ENCODE measurements at regions of chr18 and their contacts with region 1.

Region 1: GRCh38 chr18:67359873-67360838 is 156.4 kb downstream of the DSEL start:
- DNase-seq: no peak
- ATAC-seq: no peak
- H3K4me3 ChIP-seq: no peak overlapping the region
- H3K4me3 Mint-ChIP-seq: no peak overlapping the region
- H3K27ac ChIP-seq: no peak overlapping the region
- H3K27ac Mint-ChIP-seq: no peak overlapping the region
- H3K4me1 ChIP-seq: no peaks in the 10 kb centered on the region
- H3K4me1 Mint-ChIP-seq: peaks cover 0 to 11% (median 0%) of the 10 kb centered on the region in 7 donors
- H3K27me3 ChIP-seq: no peaks in the 10 kb centered on the region
- H3K27me3 Mint-ChIP-seq: peaks cover 0 to 3% (median 0%) of the 10 kb centered on the region in 5 donors

Region 2: GRCh38 chr18:67373646-67374045 is 13.5 kb after region 1 on chr18:
- CTCF ChIA-PET with region 1: no interaction called
- POLR2A ChIA-PET with region 1: no interaction called
- intact Hi-C with region 1: no loop called
- DNase-seq: no peak
- ATAC-seq: no peak
- H3K4me3 ChIP-seq: no peak overlapping the region
- H3K4me3 Mint-ChIP-seq: no peak overlapping the region
- H3K27ac ChIP-seq: no peak overlapping the region
- H3K27ac Mint-ChIP-seq: no peak overlapping the region
- H3K4me1 ChIP-seq: no peaks in the 10 kb centered on the region
- H3K4me1 Mint-ChIP-seq: no peaks in the 10 kb centered on the region
- H3K27me3 ChIP-seq: no peaks in the 10 kb centered on the region
- H3K27me3 Mint-ChIP-seq: peaks cover 0 to 2% (median 0%) of the 10 kb centered on the region in 5 donors

Region 3: DNA sequence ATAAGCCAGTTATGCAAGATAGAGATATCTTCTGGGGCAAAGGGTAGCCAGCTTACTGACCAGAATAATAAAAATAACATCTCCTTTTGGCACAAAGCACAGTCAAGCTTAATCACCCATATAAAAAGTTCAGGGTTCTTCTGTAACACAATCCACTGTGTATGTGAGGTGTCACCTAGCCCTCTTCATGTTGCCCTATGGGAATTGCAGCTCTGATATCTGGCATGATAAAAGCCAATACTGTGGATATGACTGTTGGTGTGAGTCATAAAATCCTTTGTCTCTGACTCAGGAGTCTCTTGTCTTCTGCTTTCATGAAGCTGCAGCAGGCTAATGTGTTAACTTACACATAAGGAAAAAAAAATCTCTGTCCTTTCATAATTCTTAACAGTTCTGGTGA is 65.6 kb after region 1 on chr18:
- CTCF ChIA-PET with region 1: no interaction called
- POLR2A ChIA-PET with region 1: no interaction called
- intact Hi-C with region 1: loop called in 1 of 2 experiments (anchors 10 kb)
- DNase-seq: no peak
- ATAC-seq: no peak
- H3K4me3 ChIP-seq: no peak overlapping the region
- H3K4me3 Mint-ChIP-seq: no peak overlapping the region
- H3K27ac ChIP-seq: no peak overlapping the region
- H3K27ac Mint-ChIP-seq: no peak overlapping the region
- H3K4me1 ChIP-seq: no peaks in the 10 kb centered on the region
- H3K4me1 Mint-ChIP-seq: no peaks in the 10 kb centered on the region
- H3K27me3 ChIP-seq: no peaks in the 10 kb centered on the region
- H3K27me3 Mint-ChIP-seq: no peaks in the 10 kb centered on the region